ENCODE measurements at regions of chr15 and their contacts with region 1.

Region 1: GRCh38 chr15:91965501-91966184 is 112.1 kb downstream of the SLCO3A1 start:
- DNase-seq: no peak

Region 2: DNA sequence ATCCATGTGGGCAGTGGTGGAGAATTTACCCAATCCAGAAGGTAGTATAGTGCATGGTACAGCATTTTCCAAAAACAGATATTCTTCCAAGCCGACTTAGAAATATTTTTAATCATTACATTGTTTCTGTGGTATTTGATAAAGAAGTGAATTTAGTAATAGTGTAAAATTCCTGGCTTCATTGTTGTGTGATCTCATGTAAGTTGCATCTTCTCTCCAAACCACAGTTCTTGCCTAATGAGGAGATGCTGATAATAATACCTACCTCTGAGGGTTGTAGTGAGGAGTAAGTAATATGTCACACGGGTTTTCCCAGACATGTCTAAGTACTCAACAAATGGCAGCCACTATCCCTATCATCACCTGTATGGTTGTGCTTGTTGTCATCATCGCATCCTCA is 55.1 kb after region 1 on chr15:
- intact Hi-C with region 1: loop called (anchors 1 to 10 kb)
- DNase-seq: no peak

Region 3: DNA sequence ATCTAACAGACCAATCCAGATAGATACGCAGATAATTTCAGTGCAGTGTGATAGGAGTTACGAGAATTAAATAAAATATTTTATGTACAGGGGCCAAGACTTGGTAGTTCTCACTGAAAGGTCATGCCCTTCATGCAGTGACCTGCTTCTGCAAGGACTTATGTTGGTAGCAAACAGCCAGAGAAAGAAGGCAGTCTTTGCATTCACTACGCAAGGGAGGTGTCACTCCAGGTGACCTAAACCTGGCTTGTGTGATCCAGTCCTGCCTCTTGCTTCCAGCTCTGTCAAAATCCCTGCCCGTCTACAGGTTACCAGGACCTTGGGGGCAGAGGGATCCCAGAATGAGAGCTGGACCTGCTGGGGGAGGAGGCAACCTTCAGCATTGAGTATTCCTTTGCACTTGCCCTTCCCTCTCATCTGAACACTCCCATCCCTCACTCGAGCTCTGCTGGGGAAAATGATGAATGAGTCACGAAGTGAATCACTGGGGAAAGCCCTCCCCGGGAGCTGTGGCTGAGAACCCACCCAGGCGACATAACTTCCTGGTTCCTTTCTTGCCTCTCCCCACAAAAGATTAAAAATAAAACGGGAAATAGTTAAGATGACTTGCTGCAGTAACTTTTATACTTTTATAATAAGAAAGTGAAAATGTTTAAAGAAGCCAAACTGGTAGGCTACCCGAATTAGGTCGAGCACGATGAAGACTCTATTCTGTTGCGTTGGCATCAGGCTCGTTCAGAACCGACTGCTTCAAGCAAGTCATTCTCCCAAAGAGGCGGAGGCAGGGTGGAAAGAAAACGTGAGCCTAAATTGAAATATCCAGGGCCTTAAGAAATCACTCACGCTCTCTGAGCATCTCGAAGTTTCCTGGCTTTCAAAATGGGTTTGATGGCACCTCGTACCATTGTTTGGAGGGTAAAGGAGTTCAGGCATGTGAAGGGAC is 103.9 kb after region 1 on chr15:
- intact Hi-C with region 1: no loop called
- DNase-seq: peak; percentile 86

Region 4: DNA sequence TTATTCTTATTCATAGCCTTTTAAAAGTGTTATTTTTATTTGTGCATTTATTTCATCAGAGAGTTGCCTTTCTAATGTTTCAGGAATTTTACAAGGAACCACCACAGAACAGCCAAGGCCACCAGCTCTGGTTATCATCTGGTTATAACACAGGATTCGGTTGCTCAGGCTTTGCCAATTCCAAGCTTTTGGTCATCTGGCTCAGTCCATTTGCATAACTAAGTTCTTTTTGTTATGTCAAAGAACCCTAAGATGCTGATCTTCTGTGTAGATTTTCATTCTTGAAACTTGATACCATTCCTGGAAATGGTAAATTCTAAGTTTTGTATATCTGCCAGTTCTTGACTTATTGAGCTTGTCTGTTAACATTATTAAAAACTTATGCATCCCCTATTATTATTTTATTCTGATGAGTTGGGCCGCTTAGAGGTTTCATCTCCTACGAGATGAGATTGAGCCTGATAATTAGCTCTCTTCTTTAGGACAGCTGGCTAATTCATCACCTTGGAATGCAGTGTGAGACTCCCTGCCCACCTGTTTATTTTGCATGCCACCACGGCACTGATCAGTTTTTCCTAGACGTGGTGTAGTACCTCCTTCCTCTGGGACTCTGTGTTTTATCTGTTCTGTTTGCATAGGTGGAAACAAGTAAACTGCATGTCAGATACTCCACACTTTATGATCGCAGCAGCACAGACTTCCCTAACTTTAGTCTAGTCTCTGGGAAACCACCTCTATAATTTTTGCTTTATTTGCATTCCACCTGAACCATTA is 152.7 kb after region 1 on chr15:
- intact Hi-C with region 1: no loop called
- DNase-seq: no peak

Measured in posterior vena cava (tissue), 2 donors.